ENCODE measurements at regions of chr1 and their contacts with region 1.

Region 1: GRCh38 chr1:41662061-41662764 is 177.7 kb upstream of the EDN2 start:
- DNase-seq: peak; percentile 87
- ATAC-seq: peak; percentile 68
- H3K4me3 Mint-ChIP-seq: peak overlapping the region; percentile 97
- H3K27ac Mint-ChIP-seq: no peak overlapping the region
- H3K4me1 Mint-ChIP-seq: peaks cover 79% of the 10 kb centered on the region
- H3K27me3 Mint-ChIP-seq: no peaks in the 10 kb centered on the region

Region 2: DNA sequence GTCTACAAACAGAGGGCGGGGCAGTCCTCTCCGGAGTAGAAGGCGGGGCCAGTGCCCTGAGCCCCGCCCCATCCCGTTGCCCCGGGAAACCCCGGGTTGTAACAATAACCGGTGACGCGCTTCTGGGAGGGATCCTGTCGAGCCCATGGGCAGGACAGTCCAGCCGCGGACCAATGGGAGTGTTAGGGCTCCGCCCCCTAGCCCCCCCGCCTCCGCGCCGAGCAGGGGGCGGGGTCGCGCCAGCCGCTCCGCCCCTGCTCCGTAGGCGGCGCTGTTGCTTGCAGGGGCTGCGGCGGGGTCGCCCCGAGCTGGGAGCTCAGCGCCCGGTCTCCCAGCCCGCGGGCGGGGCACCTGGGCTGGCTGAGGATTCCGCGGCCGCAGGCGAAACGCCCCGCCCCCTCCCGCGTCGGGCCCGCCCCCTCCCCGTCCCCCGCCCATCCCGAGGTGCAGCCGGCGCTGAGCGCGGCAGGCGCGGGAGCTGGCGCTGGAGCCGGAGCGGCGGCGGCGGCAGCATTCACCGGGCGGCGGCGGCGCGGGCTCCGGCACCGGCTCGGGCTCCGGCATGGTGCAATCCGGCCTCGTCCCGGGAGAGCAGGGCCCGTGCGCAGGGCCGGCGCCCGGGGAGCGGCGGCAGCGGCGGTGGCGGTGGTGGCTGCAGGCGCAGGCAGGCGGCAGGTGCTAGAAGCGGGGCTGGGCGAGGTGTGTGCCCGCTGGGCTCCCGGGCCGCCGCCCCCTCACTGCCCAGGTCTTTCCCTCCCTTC is 301.0 kb before region 1 on chr1 and contains the start of gene FOXO6:
- CTCF ChIA-PET with region 1: no interaction called
- POLR2A ChIA-PET with region 1: no interaction called
- intact Hi-C with region 1: loop called in 1 of 2 experiments (anchors 2 kb)
- DNase-seq: peak; percentile 96
- ATAC-seq: peak; percentile 96
- H3K4me3 Mint-ChIP-seq: peak within 1 kb of the TSS; percentile 49
- H3K27ac Mint-ChIP-seq: no peak within 1 kb of the TSS
- H3K4me1 Mint-ChIP-seq: peaks cover 10% of the 10 kb centered on the region
- H3K27me3 Mint-ChIP-seq: peaks cover 24% of the 10 kb centered on the region
- total RNA-seq, gene FOXO6: 0.09 TPM in 1 of 2 experiments, not detected in the other

Region 3: DNA sequence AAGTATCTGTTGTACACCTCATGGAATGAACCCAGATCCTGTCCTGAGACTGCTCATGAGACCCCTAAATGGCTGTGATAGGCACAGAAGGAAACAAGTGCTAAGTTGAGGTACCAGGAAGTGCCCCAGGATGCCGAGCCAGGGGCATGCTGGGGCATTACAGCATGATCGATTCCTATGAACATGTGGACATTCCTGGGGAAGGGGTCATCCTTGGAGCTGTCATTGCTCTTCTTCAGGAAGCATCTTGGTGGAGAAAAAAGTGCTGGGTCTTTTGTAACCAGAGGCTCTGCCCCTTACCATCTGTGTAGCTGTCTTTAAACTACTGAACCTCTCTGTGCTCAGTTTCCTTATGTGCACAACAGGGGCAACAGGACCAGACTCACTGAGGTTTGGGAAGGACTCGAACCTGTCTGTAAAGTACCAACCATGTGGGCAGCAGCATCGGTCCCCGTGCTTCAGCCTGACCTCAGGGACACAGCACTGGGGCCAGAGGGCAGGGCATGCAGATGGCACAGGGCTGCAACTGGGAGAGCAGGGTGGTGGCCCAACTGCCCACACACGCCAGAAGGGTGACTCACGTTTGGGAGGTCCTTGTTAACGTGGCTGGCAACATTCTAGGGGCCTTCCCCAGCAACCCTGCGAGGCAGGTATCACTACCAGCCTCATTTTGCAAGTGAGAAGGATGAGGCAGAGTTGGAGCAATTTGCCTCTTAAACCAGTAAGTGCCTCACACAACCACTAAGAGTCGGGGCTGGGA is 35.4 kb before region 1 on chr1:
- CTCF ChIA-PET with region 1: no interaction called
- POLR2A ChIA-PET with region 1: no interaction called
- intact Hi-C with region 1: loop called in 1 of 2 experiments (anchors 5 kb)
- DNase-seq: peak; percentile 88
- ATAC-seq: peak; percentile 98
- H3K4me3 Mint-ChIP-seq: no peak overlapping the region
- H3K27ac Mint-ChIP-seq: peak overlapping the region; percentile 82
- H3K4me1 Mint-ChIP-seq: peaks cover 84% of the 10 kb centered on the region
- H3K27me3 Mint-ChIP-seq: no peaks in the 10 kb centered on the region

Region 4: DNA sequence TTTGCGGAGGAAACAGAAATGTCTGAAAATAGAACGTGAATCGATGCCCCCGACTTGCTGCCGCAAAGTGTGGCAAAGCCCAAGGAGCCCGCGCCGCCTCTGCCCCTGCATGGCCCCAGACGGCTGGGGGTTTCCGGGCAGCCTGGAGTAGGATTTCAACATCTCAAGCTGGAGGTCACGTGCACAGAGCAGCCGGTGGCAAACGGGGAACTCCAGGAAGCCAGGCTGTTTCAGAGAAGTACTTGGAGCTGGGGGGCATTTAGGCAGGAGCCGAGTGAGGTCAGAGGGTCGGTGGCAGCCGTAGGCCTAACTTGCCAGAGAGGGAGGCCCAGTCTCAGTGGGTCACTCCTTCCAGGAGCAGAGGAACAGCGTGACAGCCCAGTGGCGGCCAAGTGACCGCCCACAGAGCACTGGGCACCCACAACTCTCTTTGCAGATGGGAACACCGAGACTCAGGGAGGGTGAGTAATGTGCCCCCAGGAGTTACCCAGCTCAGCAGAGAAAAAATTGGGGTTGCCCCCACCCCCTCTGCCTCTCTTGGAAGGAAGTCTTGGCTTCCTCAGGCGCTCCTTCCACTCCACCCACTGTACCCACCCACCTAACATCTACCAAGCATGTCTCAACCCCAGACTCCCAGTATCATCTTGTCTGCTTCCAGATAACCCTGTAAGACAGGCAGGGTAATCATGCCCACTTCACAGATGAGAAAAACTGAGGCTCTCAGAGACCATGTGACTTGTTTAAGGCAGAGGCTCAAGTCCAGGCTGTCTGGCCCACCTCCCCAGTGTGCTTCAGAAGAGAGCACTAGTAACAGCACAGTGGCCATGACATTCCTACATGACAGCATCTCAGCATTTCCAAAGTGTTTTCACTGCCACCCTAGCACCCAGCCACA is 77.1 kb after region 1 on chr1:
- CTCF ChIA-PET with region 1: no interaction called
- POLR2A ChIA-PET with region 1: no interaction called
- intact Hi-C with region 1: loop called (anchors 1 to 2 kb)
- DNase-seq: peak; percentile 95
- ATAC-seq: peak; percentile 50
- H3K4me3 Mint-ChIP-seq: peak overlapping the region; percentile 58
- H3K27ac Mint-ChIP-seq: peak overlapping the region; percentile 91
- H3K4me1 Mint-ChIP-seq: peaks cover 92% of the 10 kb centered on the region
- H3K27me3 Mint-ChIP-seq: no peaks in the 10 kb centered on the region

Region 5: GRCh38 chr1:41891199-41891896 is 229.1 kb after region 1 on chr1:
- CTCF ChIA-PET with region 1: interaction called, 3 read pairs
- POLR2A ChIA-PET with region 1: no interaction called
- intact Hi-C with region 1: loop called in 1 of 2 experiments (anchors 10 kb)
- DNase-seq: peak; percentile 72
- ATAC-seq: peak; percentile 96
- H3K4me3 Mint-ChIP-seq: peak overlapping the region; percentile 78
- H3K27ac Mint-ChIP-seq: peak overlapping the region; percentile 95
- H3K4me1 Mint-ChIP-seq: peaks cover 50% of the 10 kb centered on the region
- H3K27me3 Mint-ChIP-seq: no peaks in the 10 kb centered on the region

Region 6: DNA sequence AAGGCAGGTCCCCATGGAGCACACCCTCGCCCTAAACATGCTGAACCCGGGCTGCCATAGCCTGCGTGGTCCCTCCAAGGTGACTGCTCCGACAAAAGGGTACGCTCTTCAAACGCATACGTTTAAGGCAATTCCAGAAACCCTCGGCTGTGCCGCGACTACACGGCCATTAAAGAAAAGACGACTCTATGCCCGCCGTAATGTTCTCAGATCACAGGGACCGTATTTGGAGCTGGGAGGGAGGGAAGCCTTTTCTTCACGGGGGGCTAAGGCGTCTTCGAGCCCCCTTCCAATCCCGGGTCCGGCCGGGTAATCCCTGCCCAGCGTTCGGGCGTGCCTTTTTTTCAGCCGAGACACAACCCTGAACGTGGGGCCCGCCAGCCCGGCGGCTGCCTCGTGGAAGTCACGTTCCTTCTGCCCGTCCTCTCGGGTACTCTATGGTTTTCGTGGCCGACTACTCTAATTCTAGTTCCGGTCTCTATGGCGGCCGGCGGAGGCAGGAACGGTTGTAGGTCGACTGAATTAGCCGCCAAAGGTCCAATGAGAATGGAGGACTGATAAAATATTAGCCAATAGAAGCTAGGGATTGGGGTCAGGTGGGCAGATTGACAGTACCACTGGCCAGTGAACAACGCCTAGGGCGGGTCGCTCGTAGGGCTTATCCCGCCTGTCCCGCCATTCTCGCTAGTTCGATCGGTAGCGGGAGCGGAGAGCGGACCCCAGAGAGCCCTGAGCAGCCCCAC is 1019.7 kb after region 1 on chr1 and contains the start of gene YBX1:
- CTCF ChIA-PET with region 1: no interaction called
- POLR2A ChIA-PET with region 1: no interaction called
- intact Hi-C with region 1: loop called in 1 of 2 experiments (anchors 10 kb)
- DNase-seq: peak; percentile 96
- ATAC-seq: peak; percentile 97
- H3K4me3 Mint-ChIP-seq: peak within 1 kb of the TSS; percentile 93
- H3K27ac Mint-ChIP-seq: peak within 1 kb of the TSS; percentile 97
- H3K4me1 Mint-ChIP-seq: peaks cover 41% of the 10 kb centered on the region
- H3K27me3 Mint-ChIP-seq: no peaks in the 10 kb centered on the region
- total RNA-seq, gene YBX1: 1,224 to 1,435 TPM